AG04450 (cell line): ENCODE measurements at regions of chr15 and their contacts with region 1.

Region 1: DNA sequence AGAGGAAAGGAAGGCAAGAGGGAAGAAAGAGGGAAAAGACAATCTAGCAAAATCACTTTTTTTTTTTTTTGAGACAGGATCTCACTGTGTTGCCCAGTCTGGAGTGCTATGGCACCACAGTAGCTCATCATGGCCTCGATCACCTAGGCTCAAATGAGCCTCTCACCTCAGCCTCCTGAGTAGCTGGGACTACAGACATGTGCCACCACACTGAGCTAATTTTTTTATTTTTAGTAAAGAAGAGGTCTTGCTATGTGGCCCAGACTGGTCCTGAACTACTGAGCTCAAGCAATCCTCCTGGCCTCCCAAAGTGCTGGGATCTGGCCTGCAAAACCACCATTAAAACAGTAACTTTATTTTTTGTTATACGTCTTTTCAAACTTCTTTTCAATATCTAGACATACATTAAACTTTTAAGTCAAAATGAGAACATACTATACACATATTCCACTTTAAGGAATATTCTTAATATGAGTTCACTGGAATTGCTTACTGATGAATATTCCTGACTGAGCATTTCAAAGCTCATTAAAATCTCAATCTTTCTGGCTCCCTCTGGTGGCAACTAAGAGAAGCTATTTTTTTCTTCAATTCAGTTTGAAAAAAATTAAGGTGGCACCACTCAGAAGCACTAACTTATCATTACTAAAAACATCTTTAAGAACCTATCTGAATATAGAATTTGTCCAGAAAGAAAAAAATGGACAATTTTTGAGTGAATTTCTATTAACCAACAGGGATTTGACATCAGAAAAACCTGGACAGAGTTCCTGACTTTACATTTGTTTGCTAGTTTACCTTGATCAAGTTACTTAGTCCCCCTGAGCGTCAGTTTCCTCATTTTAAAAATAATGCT is 40.9 kb downstream of the UACA start:
- DNase-seq: peak; percentile 43
- H3K4me3 ChIP-seq: no peak overlapping the region
- H3K27ac ChIP-seq: no peak overlapping the region
- H3K27me3 ChIP-seq: no peaks in the 10 kb centered on the region
- CTCF ChIP-seq: peak; percentile 71

Region 2: GRCh38 chr15:70679919-70680231 is 42.6 kb before region 1 on chr15:
- CTCF ChIA-PET with region 1: interaction called, 60 read pairs
- POLR2A ChIA-PET with region 1: no interaction called
- DNase-seq: no peak
- H3K4me3 ChIP-seq: no peak overlapping the region
- H3K27ac ChIP-seq: no peak overlapping the region
- H3K27me3 ChIP-seq: no peaks in the 10 kb centered on the region
- CTCF ChIP-seq: no peak

Region 3: DNA sequence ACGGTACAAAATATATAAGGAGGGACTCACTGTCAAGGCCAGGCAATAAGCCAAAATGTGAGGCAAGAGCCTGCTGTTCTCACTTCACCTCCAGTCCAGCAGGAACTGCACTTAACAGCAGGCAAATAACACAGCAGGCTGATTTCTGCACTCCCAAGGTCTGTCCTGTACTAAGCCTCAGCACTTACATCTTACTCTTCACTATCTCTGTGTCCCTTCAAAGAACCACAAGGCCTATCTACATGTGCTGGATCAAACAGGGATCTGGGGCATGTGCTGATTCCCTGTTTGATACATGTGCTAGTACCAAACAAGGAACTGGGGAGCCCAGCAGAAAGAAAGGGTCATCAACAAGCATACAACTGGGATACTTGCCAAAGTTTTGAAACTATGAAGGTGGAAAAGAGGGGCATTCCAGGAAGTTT is 18.6 kb after region 1 on chr15:
- CTCF ChIA-PET with region 1: interaction called, 17 read pairs
- POLR2A ChIA-PET with region 1: no interaction called
- DNase-seq: peak; percentile 58
- H3K4me3 ChIP-seq: no peak overlapping the region
- H3K27ac ChIP-seq: peak overlapping the region; percentile 43
- H3K27me3 ChIP-seq: no peaks in the 10 kb centered on the region
- CTCF ChIP-seq: no peak

Region 4: DNA sequence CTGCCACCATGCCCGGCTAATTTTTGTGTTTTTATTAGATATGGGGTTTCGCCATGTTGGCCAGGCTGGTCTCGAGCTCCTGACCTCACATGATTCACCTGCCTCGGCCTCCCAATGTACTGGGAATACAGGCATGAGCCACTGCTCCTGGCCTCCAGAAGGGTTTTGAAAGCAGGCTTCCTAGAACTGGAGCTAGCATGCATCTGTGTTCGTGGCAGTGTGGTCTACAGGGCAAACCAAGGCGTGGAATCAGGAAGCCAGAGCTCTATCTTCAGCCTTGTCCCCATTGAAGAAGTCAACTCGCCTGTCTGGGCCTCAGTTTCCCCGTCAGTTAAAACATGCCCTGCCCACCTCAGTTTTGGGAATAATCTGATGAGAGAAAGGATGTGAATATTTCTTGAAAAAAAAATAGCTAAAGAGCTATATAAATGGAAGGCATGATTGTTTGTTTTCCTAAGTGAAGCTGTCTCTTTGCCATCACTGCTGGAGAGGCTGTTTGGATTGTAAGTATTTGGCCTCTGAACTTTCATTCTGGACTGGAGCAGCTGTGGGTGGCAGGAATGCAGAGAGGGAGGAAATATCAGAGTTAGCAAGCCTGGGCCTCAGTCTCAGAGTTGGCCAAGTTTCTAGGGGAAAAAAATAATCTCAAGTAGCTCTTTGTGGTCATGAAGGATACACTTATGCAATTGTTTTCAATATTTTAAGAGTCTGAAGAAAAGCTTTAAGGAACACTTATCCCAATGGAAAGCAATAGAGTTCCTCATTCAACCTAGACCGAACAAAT is 77.4 kb after region 1 on chr15:
- CTCF ChIA-PET with region 1: interaction called, 15 read pairs
- POLR2A ChIA-PET with region 1: interaction called, 3 read pairs
- DNase-seq: peak; percentile 95
- H3K4me3 ChIP-seq: no peak overlapping the region
- H3K27ac ChIP-seq: peak overlapping the region; percentile 92
- H3K27me3 ChIP-seq: no peaks in the 10 kb centered on the region
- CTCF ChIP-seq: no peak